ENCODE measurements at regions of chr4 and their contacts with region 1.

Region 1: DNA sequence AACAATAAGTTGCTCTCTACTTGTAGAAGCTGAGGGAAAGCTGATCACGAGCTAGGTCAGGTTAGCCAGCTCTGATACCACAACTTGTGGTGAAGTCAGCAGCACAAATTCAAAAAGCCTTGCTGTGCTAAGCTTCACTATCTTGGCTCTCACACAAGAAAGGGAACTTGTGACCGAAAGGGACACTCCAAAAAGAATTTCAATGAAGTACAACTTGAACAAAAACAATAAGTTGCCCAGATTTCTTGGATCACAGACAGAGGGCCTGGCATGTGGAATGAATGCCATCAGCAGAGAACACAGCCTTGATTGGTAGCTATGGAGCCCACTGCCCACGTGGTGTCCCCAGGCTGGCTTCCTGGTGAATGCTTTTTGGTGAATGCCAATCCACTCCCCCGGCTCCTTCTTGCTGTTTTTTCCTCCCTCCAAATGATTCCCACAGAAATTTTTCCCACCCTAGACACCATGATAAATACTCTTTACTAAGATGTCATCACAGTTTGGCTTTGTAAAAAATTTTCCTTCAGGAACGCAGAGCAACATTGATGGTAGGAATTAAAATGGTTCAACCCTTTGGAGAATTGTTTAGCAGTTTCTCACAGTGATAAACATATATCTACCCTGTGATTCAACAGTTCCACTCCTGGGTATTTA is 82.6 kb downstream of the ANXA3 start:
- H3K4me3 ChIP-seq: no peak overlapping the region
- H3K27ac ChIP-seq: no peak overlapping the region
- H3K4me1 ChIP-seq: no peaks in the 10 kb centered on the region
- CTCF ChIP-seq: no peak

Region 2: GRCh38 chr4:78644744-78645330 is 10.7 kb after region 1 on chr4:
- CTCF ChIA-PET with region 1: interaction called, 12 read pairs
- POLR2A ChIA-PET with region 1: no interaction called
- H3K4me3 ChIP-seq: no peak overlapping the region
- H3K27ac ChIP-seq: no peak overlapping the region
- H3K4me1 ChIP-seq: no peaks in the 10 kb centered on the region
- CTCF ChIP-seq: 0 out of 2 replicates have a peak, but pooled peaks have one; percentile 10

Measured in HEK293 (cell line).